ENCODE measurements at regions of chr11 and their contacts with region 1.

Region 1: DNA sequence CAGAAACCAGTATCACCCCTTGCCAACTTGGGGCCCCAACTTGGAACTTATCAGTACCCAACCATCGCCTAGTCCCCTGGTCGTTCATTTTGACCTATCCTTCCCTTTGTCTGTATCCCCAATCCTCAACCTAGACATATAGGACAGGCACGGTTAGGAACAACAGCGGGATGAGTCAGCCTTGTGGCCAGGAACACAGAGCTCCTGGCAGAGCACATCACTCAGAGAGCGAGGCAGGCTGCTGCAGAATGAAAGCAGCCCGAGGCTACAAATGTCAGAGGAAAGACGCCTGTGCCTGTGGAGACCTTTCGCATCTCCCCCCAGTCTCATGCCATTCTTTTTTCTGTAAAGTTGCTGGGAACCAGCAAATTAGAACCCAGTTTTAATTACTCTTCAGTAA is 14.6 kb downstream of the DKK3 start:
- DNase-seq: peak; percentile 41
- H3K4me3 ChIP-seq: no peak overlapping the region
- H3K27ac ChIP-seq: peak overlapping the region; percentile 48
- H3K4me1 ChIP-seq: peaks cover 29% of the 10 kb centered on the region
- H3K27me3 ChIP-seq: no peaks in the 10 kb centered on the region
- CTCF ChIP-seq: no peak
- POLR2A ChIP-seq: no peak

Region 2: DNA sequence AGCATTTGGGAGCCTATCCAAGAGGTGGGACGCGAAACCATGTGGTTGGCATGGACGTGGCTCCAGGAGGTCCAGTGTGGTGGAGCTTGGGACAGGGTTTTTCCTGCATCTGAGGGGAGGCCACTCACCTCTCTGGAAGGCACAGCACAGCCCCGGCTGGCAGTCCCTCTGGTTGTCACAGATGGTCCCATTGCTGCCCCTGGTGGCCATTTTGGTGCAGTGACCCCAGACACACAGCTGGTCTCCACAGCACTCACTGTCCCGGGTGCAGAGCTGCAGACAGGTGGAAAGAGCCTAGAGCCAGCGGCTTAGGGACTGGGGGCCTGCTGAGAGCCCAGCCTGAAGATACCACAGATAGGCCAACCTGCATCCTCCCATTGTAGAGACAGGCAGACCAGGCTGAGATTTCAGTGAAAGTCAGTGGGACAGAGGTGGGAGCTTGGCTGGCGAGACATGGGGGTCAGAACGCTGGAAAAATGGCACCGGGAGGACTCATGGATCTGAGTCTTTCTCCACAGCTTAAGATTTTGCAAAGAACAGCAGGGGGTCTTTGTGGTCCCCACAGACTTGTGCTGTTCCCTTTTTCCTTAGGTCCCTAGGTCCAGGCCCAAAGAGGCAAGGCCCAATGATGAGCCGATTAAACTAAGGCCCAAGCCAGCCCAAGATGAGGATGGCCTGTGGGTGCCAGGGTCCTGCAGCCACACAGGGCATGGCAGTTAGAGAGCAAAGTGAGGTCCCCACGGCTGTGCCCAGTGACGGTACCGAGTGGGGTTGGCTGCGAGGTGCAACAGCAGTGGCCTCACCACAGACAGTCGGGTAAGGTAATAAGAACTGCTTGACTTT is 26.8 kb before region 1 on chr11:
- CTCF ChIA-PET with region 1: interaction called, 13 read pairs
- POLR2A ChIA-PET with region 1: no interaction called
- dilution Hi-C with region 1: no loop called
- intact Hi-C with region 1: no loop called
- DNase-seq: peak; percentile 49
- H3K4me3 ChIP-seq: no peak overlapping the region
- H3K27ac ChIP-seq: no peak overlapping the region
- H3K4me1 ChIP-seq: no peaks in the 10 kb centered on the region
- H3K27me3 ChIP-seq: no peaks in the 10 kb centered on the region
- CTCF ChIP-seq: peak; percentile 80 to 86
- POLR2A ChIP-seq: no peak

Region 3: GRCh38 chr11:12050470-12051286 is 56.8 kb after region 1 on chr11:
- CTCF ChIA-PET with region 1: no interaction called
- POLR2A ChIA-PET with region 1: no interaction called
- dilution Hi-C with region 1: no loop called
- intact Hi-C with region 1: no loop called
- DNase-seq: no peak
- H3K4me3 ChIP-seq: no peak overlapping the region
- H3K27ac ChIP-seq: no peak overlapping the region
- H3K4me1 ChIP-seq: peaks cover 19% of the 10 kb centered on the region
- H3K27me3 ChIP-seq: no peaks in the 10 kb centered on the region
- CTCF ChIP-seq: no peak
- POLR2A ChIP-seq: no peak

Measured in endothelial cell of umbilical vein (primary cell).